ENCODE measurements at regions of chr6 and their contacts with region 1.

Region 1: DNA sequence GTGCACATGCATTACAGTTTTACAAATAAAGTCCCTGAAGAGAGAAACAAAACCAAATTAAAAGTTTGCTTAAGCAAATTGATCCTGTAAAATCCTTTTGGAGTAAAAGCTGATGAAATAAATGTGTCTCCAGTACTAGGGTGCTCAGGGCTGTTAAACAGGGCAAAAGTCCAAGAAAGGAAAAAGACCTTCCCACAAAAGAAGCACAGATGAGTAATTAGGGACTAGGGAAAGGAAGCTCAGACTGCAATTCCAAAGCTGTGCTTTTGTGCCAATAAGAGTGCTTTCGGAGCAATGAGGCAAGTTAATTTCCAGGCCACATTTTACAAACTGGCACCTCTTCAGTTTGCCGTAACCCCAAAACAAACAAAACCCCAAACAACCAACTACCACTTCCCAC is 10.4 kb upstream of the RNF182 start:
- DNase-seq: no peak
- H3K4me3 ChIP-seq: no peak overlapping the region
- H3K27ac ChIP-seq: peak overlapping the region; percentile 28
- H3K4me1 ChIP-seq: peaks cover 20% of the 10 kb centered on the region
- H3K27me3 ChIP-seq: no peaks in the 10 kb centered on the region
- CTCF ChIP-seq: no peak

Region 2: DNA sequence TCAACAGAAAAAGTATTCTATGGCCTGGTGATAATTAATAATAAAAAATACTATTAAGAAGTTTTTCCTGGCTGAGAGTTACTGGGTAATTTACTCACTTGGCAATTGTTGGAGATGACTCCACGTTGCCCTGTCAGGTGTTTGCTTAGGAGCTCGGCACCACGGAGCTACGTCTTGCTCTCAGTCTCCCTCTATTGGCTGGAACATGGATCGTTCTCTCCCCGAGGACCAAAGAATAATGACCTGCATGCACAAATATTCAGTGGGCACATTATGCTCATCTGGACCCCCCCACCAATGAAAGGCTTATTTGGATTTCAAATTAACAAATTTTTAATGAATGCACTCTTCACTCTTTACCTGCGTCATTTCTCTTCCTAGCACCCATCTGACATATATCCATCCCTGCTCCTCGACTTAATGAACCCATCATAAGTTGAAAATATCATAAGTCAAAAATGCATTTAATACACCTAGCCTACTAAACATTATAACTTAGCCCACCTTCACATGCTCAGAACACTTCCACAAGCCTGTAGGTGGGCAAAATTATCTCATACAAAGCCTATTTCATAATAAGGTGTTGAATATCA is 132.2 kb after region 1 on chr6:
- CTCF ChIA-PET with region 1: interaction called, 11 read pairs
- POLR2A ChIA-PET with region 1: no interaction called
- intact Hi-C with region 1: loop called (anchors 2 kb)
- DNase-seq: peak; percentile 66
- H3K4me3 ChIP-seq: no peak overlapping the region
- H3K27ac ChIP-seq: no peak overlapping the region
- H3K4me1 ChIP-seq: peaks cover 3% of the 10 kb centered on the region
- H3K27me3 ChIP-seq: no peaks in the 10 kb centered on the region
- CTCF ChIP-seq: peak; percentile 83

Region 3: GRCh38 chr6:14066782-14067406 is 152.5 kb after region 1 on chr6:
- CTCF ChIA-PET with region 1: interaction called, 28 read pairs
- POLR2A ChIA-PET with region 1: no interaction called
- intact Hi-C with region 1: loop called (anchors 1 kb)
- DNase-seq: peak; percentile 84
- H3K4me3 ChIP-seq: no peak overlapping the region
- H3K27ac ChIP-seq: no peak overlapping the region
- H3K4me1 ChIP-seq: no peaks in the 10 kb centered on the region
- H3K27me3 ChIP-seq: no peaks in the 10 kb centered on the region
- CTCF ChIP-seq: peak; percentile 75

Region 4: GRCh38 chr6:14077193-14077867 is 163.0 kb after region 1 on chr6:
- CTCF ChIA-PET with region 1: no interaction called
- POLR2A ChIA-PET with region 1: no interaction called
- intact Hi-C with region 1: no loop called
- DNase-seq: no peak
- H3K4me3 ChIP-seq: no peak overlapping the region
- H3K27ac ChIP-seq: no peak overlapping the region
- H3K4me1 ChIP-seq: peaks cover 18% of the 10 kb centered on the region
- H3K27me3 ChIP-seq: no peaks in the 10 kb centered on the region
- CTCF ChIP-seq: no peak

Measured in A673 (cell line).